ENCODE measurements at regions of chr1 and their contacts with region 1.

Region 1: GRCh38 chr1:88341447-88341846 is 342.6 kb upstream of the PKN2 start:
- DNase-seq: no peak

Region 2: DNA sequence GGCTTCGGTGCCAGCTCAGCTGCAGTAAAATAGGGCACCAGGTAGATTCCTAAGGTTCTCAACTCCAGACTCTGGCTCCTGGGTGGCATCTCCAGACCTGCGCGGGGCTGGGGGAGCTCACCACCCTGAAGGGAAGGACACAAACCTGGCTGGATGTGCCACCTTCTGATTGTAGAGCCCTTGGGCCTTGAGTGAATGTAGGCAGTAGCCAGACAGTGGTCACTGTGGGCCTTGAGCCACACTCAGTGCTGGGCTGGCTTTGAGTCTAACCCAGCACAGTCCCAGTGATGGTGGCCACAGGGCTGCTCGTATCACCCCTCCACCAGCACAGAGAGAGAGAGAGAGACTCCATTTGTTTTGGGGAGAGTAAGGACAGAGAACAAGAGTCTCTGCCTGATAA is 1675.1 kb before region 1 on chr1:
- intact Hi-C with region 1: loop called in 1 of 2 experiments (anchors 10 kb)
- DNase-seq: no peak